ENCODE measurements at regions of chr7 and their contacts with region 1.

Region 1: GRCh38 chr7:148712678-148713329 is 14.1 kb downstream of the CUL1 start:
- DNase-seq: no peak

Region 2: DNA sequence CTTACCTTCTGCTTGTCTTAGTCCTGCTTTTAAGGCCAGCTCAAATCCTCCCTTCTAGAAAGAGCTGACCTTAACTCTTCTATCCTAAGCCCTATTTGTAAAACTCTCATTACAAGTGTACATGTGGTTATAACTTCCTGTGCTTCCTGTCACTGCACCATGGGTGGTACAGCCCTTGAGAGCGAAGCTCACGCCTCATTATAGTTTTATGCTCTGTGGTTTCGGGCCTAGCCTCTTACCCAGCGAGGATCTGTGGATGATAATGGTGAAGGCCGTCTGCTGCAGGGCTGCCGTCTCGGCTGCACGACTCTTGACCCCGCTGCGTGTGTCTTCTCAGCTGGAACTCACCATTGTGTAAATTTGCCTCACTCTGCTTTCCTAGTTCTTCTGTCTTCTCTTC is 60.5 kb after region 1 on chr7:
- intact Hi-C with region 1: loop called in 1 of 2 experiments (anchors 10 kb)
- DNase-seq: no peak

Region 3: GRCh38 chr7:149005241-149006050 is 292.6 kb after region 1 on chr7:
- intact Hi-C with region 1: no loop called
- DNase-seq: peak; percentile 94